ENCODE measurements at regions of chr4 and their contacts with region 1.

Region 1: DNA sequence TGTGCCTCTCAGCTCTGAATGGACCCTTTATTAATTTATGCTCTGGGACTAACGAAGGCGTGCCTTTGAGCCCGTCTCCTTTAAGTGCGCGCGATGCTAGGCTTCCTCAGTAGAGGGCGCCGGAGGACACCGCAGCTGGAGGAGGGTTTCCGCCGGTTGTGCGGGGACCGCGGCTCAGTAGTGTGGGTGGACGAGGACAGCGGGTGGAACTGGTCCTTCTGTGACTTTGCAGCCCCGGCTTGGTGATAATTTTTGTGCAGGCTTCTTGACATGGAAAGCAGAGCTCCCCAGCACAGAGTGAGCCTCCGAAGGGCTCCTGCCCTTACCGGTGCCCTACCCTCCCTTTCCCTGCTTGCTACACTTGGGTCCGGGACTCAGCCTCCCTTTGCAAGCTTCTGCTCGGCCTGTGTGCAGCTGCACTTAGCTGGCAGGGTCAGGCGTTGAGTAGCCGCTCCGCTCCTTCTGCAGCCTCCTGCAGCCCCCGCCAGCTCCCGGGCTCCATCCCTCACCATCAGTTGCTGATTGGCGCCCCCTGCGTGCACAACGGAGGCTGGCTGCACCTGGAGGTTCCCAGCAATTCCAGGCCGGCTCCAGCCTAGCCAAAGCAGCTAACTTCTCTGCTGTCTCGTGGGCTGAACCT is 26.8 kb upstream of the BOD1L1 start:
- DNase-seq: peak; percentile 55 to 84 (median 73)
- ATAC-seq: peak; percentile 93
- H3K4me3 ChIP-seq: peak overlapping the region; percentile 60
- H3K4me3 Mint-ChIP-seq: peak overlapping the region; percentile 94
- H3K27ac ChIP-seq: no peak overlapping the region
- H3K27ac Mint-ChIP-seq: no peak overlapping the region
- H3K4me1 ChIP-seq: peaks cover 6% of the 10 kb centered on the region
- H3K4me1 Mint-ChIP-seq: peaks cover 18% of the 10 kb centered on the region
- H3K27me3 ChIP-seq: no peaks in the 10 kb centered on the region
- H3K27me3 Mint-ChIP-seq: peaks cover 21% of the 10 kb centered on the region
- CTCF ChIP-seq: peak; percentile 84

Region 2: GRCh38 chr4:13522282-13523104 is 131.8 kb before region 1 on chr4:
- CTCF ChIA-PET with region 1: no interaction called
- POLR2A ChIA-PET with region 1: no interaction called
- intact Hi-C with region 1: no loop called
- DNase-seq: peak in 1 of 14 experiments; percentile 29
- ATAC-seq: no peak
- H3K4me3 ChIP-seq: no peak overlapping the region
- H3K4me3 Mint-ChIP-seq: peak overlapping the region; percentile 7
- H3K27ac ChIP-seq: no peak overlapping the region
- H3K27ac Mint-ChIP-seq: no peak overlapping the region
- H3K4me1 ChIP-seq: peaks cover 16% of the 10 kb centered on the region
- H3K4me1 Mint-ChIP-seq: peaks cover 9% of the 10 kb centered on the region
- H3K27me3 ChIP-seq: peaks cover 57 to 77% of the 10 kb centered on the region in 2 experiments
- H3K27me3 Mint-ChIP-seq: peaks cover 83% of the 10 kb centered on the region
- CTCF ChIP-seq: no peak

Region 3: DNA sequence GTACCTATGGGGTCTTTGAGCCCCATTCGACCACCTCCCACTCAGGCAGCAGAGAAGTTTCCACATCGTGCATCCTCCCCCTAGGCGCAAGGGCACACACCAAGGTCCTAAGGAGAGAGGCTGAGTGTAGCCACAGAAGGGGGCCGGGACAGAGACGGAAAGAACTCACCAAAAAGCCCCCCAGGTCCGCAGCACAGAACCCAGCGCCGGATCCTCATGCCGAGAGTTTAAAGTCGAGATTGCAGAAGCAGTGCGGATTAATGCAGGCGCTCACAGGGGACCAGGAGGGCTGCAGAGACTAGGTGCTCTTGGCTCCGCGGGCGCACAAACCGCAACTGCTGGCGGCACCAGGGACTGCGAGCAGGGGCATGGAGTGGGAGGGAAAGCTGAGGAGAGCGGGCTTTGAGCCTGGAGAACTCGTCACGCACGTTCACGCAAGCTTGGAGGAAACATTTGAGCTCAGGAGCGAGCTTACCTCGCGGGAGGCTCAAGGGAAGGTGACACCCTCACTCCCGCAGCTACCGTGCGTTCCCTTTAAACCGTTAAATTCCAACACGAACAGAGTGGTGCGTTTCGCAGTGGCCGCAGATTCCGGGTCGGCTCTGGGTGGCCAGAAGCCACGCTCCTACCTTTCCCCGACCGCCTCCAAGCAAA is 118.4 kb before region 1 on chr4:
- CTCF ChIA-PET with region 1: no interaction called
- POLR2A ChIA-PET with region 1: no interaction called
- intact Hi-C with region 1: no loop called
- DNase-seq: peak in 1 of 14 experiments; percentile 9
- ATAC-seq: no peak
- H3K4me3 ChIP-seq: no peak overlapping the region
- H3K4me3 Mint-ChIP-seq: no peak overlapping the region
- H3K27ac ChIP-seq: no peak overlapping the region
- H3K27ac Mint-ChIP-seq: no peak overlapping the region
- H3K4me1 ChIP-seq: peaks cover 51% of the 10 kb centered on the region
- H3K4me1 Mint-ChIP-seq: peaks cover 44% of the 10 kb centered on the region
- H3K27me3 ChIP-seq: peaks cover 95 to 98% of the 10 kb centered on the region in 2 experiments
- H3K27me3 Mint-ChIP-seq: peaks cover 95% of the 10 kb centered on the region
- CTCF ChIP-seq: no peak

Region 4: GRCh38 chr4:13580036-13580435 is 74.2 kb before region 1 on chr4:
- CTCF ChIA-PET with region 1: no interaction called
- POLR2A ChIA-PET with region 1: no interaction called
- intact Hi-C with region 1: no loop called
- DNase-seq: no peak
- ATAC-seq: no peak
- H3K4me3 ChIP-seq: no peak overlapping the region
- H3K4me3 Mint-ChIP-seq: no peak overlapping the region
- H3K27ac ChIP-seq: no peak overlapping the region
- H3K27ac Mint-ChIP-seq: no peak overlapping the region
- H3K4me1 ChIP-seq: no peaks in the 10 kb centered on the region
- H3K4me1 Mint-ChIP-seq: no peaks in the 10 kb centered on the region
- H3K27me3 ChIP-seq: no peaks in the 10 kb centered on the region
- H3K27me3 Mint-ChIP-seq: no peaks in the 10 kb centered on the region
- CTCF ChIP-seq: no peak

Region 5: GRCh38 chr4:13627606-13628301 is 26.5 kb before region 1 on chr4 and contains the start of gene BOD1L1:
- CTCF ChIA-PET with region 1: interaction called, 17 read pairs
- POLR2A ChIA-PET with region 1: interaction called, 10 read pairs
- intact Hi-C with region 1: loop called in 1 of 2 experiments (anchors 2 kb)
- DNase-seq: peak; percentile 52 to 92 (median 73)
- ATAC-seq: peak; percentile 66
- H3K4me3 ChIP-seq: peak within 1 kb of the TSS; percentile 84
- H3K4me3 Mint-ChIP-seq: peak within 1 kb of the TSS; percentile 96
- H3K27ac ChIP-seq: peak within 1 kb of the TSS; percentile 81 to 88
- H3K27ac Mint-ChIP-seq: peak within 1 kb of the TSS; percentile 94
- H3K4me1 ChIP-seq: peaks cover 22% of the 10 kb centered on the region
- H3K4me1 Mint-ChIP-seq: peaks cover 57% of the 10 kb centered on the region
- H3K27me3 ChIP-seq: no peaks in the 10 kb centered on the region
- H3K27me3 Mint-ChIP-seq: no peaks in the 10 kb centered on the region
- CTCF ChIP-seq: peak; percentile 15
- total RNA-seq, gene BOD1L1: 39.3 to 39.6 TPM

Region 6: GRCh38 chr4:14254252-14254651 is 600.0 kb after region 1 on chr4:
- CTCF ChIA-PET with region 1: no interaction called
- POLR2A ChIA-PET with region 1: no interaction called
- intact Hi-C with region 1: loop called in 1 of 2 experiments (anchors 10 kb)
- DNase-seq: peak in 5 of 14 experiments; percentile 2 to 16 (median 4)
- ATAC-seq: no peak
- H3K4me3 ChIP-seq: no peak overlapping the region
- H3K4me3 Mint-ChIP-seq: no peak overlapping the region
- H3K27ac ChIP-seq: no peak overlapping the region
- H3K27ac Mint-ChIP-seq: no peak overlapping the region
- H3K4me1 ChIP-seq: no peaks in the 10 kb centered on the region
- H3K4me1 Mint-ChIP-seq: no peaks in the 10 kb centered on the region
- H3K27me3 ChIP-seq: no peaks in the 10 kb centered on the region
- H3K27me3 Mint-ChIP-seq: no peaks in the 10 kb centered on the region
- CTCF ChIP-seq: no peak

Region 7: GRCh38 chr4:15396157-15396800 is 1742.0 kb after region 1 on chr4:
- CTCF ChIA-PET with region 1: no interaction called
- POLR2A ChIA-PET with region 1: no interaction called
- intact Hi-C with region 1: loop called in 1 of 2 experiments (anchors 5 kb)
- DNase-seq: peak; percentile 5 to 71 (median 38)
- ATAC-seq: peak; percentile 80
- H3K4me3 ChIP-seq: no peak overlapping the region
- H3K4me3 Mint-ChIP-seq: no peak overlapping the region
- H3K27ac ChIP-seq: no peak overlapping the region
- H3K27ac Mint-ChIP-seq: no peak overlapping the region
- H3K4me1 ChIP-seq: peaks cover 24% of the 10 kb centered on the region
- H3K4me1 Mint-ChIP-seq: peaks cover 35% of the 10 kb centered on the region
- H3K27me3 ChIP-seq: no peaks in the 10 kb centered on the region
- H3K27me3 Mint-ChIP-seq: no peaks in the 10 kb centered on the region
- CTCF ChIP-seq: peak; percentile 78

Region 8: DNA sequence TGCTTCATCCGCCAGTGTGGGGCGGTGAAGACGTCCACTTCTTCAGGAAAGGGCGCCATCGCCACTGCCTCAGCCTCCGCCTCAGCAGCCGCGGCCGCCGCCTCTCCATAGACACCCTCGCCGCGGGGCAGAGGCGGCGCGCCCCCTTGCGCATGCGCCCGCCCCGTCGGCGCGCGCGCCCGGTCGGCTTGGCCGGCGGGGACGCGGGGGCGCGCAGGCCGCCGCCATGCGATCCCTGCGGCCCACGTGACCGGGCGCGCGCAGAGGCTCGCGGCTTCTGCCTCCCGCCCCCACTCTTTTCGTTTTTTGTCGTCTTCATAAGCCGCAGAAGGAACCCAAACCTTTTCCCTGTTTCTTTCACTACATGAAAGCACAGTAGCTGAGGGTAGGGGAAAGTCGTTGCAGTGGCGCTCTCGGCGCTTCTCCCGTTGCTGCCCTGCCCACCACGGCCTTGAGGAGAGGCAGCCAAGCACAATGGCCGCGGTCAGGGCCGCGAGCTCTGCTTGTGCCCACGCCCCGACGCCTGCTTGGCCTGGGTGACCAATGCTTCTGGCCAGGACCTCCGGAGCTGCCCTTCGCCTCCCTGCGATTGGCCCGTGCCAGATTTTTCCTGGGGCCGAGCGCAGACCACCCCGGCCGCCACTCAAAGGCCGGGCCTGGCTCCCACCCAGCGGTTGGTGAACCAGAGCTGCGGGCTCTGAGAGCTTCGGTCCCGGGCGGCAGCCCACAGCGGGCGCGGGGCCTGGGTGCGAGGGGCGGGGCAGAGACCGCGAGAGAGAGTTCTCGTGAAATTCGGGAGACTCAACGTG is 2001.2 kb after region 1 on chr4 and contains the start of gene FBXL5:
- CTCF ChIA-PET with region 1: no interaction called
- POLR2A ChIA-PET with region 1: no interaction called
- intact Hi-C with region 1: loop called (anchors 10 kb)
- DNase-seq: peak; percentile 58 to 97 (median 80)
- ATAC-seq: peak; percentile 78
- H3K4me3 ChIP-seq: peak within 1 kb of the TSS; percentile 89
- H3K4me3 Mint-ChIP-seq: peak within 1 kb of the TSS; percentile 95
- H3K27ac ChIP-seq: peak within 1 kb of the TSS; percentile 90 to 93
- H3K27ac Mint-ChIP-seq: peak within 1 kb of the TSS; percentile 90
- H3K4me1 ChIP-seq: peaks cover 22% of the 10 kb centered on the region
- H3K4me1 Mint-ChIP-seq: peaks cover 46% of the 10 kb centered on the region
- H3K27me3 ChIP-seq: no peaks in the 10 kb centered on the region
- H3K27me3 Mint-ChIP-seq: no peaks in the 10 kb centered on the region
- CTCF ChIP-seq: no peak
- total RNA-seq, gene FBXL5: 60.1 to 62.5 TPM

Measured in CD4-positive, alpha-beta T cell (primary cell).